ENCODE measurements at regions of chr1 and their contacts with region 1.

Region 1: GRCh38 chr1:154335025-154335714 is 9.8 kb downstream of the ATP8B2 start:
- DNase-seq: peak; percentile 85 to 93 (median 87)
- H3K4me3 ChIP-seq: no peak overlapping the region
- H3K4me3 Mint-ChIP-seq: peak overlapping the region; percentile 68 to 90 (median 80)
- H3K27ac ChIP-seq: peak overlapping the region; percentile 52
- H3K27ac Mint-ChIP-seq: peak overlapping the region; percentile 86 to 99 (median 93)
- H3K4me1 ChIP-seq: peaks cover 93% of the 10 kb centered on the region
- H3K4me1 Mint-ChIP-seq: peaks cover 56 to 93% (median 75%) of the 10 kb centered on the region in 4 donors
- H3K27me3 ChIP-seq: no peaks in the 10 kb centered on the region
- H3K27me3 Mint-ChIP-seq: no peaks in the 10 kb centered on the region

Region 2: GRCh38 chr1:154198756-154199562 is 136.2 kb before region 1 on chr1:
- CTCF ChIA-PET with region 1: interaction called, 46 read pairs
- POLR2A ChIA-PET with region 1: interaction called, 9 read pairs
- intact Hi-C with region 1: loop called (anchors 1 kb)
- DNase-seq: peak; percentile 53 to 62 (median 58)
- H3K4me3 ChIP-seq: no peak overlapping the region
- H3K4me3 Mint-ChIP-seq: no peak overlapping the region
- H3K27ac ChIP-seq: no peak overlapping the region
- H3K27ac Mint-ChIP-seq: peak overlapping the region in 2 of 7 donors; percentile 64 to 74
- H3K4me1 ChIP-seq: peaks cover 7% of the 10 kb centered on the region
- H3K4me1 Mint-ChIP-seq: no peaks in the 10 kb centered on the region
- H3K27me3 ChIP-seq: no peaks in the 10 kb centered on the region
- H3K27me3 Mint-ChIP-seq: peaks cover 0 to 3% of the 10 kb centered on the region in 2 donors

Region 3: GRCh38 chr1:154263465-154264332 is 71.5 kb before region 1 on chr1:
- CTCF ChIA-PET with region 1: interaction called, 10 read pairs
- POLR2A ChIA-PET with region 1: interaction called, 3 read pairs
- intact Hi-C with region 1: no loop called
- DNase-seq: no peak
- H3K4me3 ChIP-seq: no peak overlapping the region
- H3K4me3 Mint-ChIP-seq: no peak overlapping the region
- H3K27ac ChIP-seq: no peak overlapping the region
- H3K27ac Mint-ChIP-seq: peak overlapping the region; percentile 59 to 91 (median 87)
- H3K4me1 ChIP-seq: peaks cover 30% of the 10 kb centered on the region
- H3K4me1 Mint-ChIP-seq: peaks cover 25 to 40% (median 34%) of the 10 kb centered on the region in 4 donors
- H3K27me3 ChIP-seq: no peaks in the 10 kb centered on the region
- H3K27me3 Mint-ChIP-seq: no peaks in the 10 kb centered on the region

Region 4: DNA sequence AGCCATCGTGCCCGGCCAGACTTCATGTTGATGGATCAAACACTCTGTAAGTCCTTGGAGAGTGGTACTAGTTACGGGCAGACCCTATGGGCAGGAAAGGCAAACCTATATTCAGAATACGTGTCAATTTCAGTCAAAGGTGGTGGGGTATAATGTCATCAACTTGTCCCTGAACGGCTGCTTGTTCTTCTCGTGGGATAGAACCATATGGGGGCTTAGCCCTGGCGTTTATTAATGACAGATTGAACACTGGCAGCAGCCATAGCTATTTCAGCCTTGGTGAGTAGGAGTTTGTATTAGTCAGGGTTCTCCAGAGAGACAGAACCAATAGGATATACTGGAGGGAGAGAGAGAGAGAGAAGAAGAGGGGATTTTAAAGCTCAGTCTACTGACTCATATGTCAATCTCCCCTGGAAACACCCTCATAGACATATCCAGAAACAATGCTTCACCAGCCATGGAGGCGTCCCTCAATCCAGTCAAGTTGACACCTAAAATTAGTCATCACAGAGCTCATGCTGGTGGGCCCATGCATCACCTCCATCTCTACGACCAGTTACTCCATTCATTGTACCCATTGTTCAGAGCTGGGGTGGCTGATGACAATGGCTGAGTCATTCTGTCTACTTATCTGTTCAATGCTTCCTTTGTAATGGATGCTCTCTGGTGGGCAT is 30.4 kb before region 1 on chr1:
- CTCF ChIA-PET with region 1: interaction called, 14 read pairs
- POLR2A ChIA-PET with region 1: interaction called, 6 read pairs
- intact Hi-C with region 1: no loop called
- DNase-seq: no peak
- H3K4me3 ChIP-seq: no peak overlapping the region
- H3K4me3 Mint-ChIP-seq: no peak overlapping the region
- H3K27ac ChIP-seq: no peak overlapping the region
- H3K27ac Mint-ChIP-seq: peak overlapping the region in 1 of 7 donors; percentile 71
- H3K4me1 ChIP-seq: peaks cover 13% of the 10 kb centered on the region
- H3K4me1 Mint-ChIP-seq: peaks cover 7 to 12% (median 12%) of the 10 kb centered on the region in 4 donors
- H3K27me3 ChIP-seq: no peaks in the 10 kb centered on the region
- H3K27me3 Mint-ChIP-seq: no peaks in the 10 kb centered on the region

Region 5: GRCh38 chr1:154344977-154345837 is 10.0 kb after region 1 on chr1:
- CTCF ChIA-PET with region 1: interaction called, 543 read pairs
- POLR2A ChIA-PET with region 1: interaction called, 728 read pairs
- intact Hi-C with region 1: loop called (anchors 1 kb)
- DNase-seq: peak; percentile 75 to 84 (median 81)
- H3K4me3 ChIP-seq: peak overlapping the region; percentile 62
- H3K4me3 Mint-ChIP-seq: peak overlapping the region; percentile 87 to 99 (median 94)
- H3K27ac ChIP-seq: peak overlapping the region; percentile 66
- H3K27ac Mint-ChIP-seq: peak overlapping the region; percentile 86 to 98 (median 92)
- H3K4me1 ChIP-seq: peaks cover 96% of the 10 kb centered on the region
- H3K4me1 Mint-ChIP-seq: peaks cover 54 to 98% (median 76%) of the 10 kb centered on the region in 4 donors
- H3K27me3 ChIP-seq: no peaks in the 10 kb centered on the region
- H3K27me3 Mint-ChIP-seq: no peaks in the 10 kb centered on the region

Region 6: DNA sequence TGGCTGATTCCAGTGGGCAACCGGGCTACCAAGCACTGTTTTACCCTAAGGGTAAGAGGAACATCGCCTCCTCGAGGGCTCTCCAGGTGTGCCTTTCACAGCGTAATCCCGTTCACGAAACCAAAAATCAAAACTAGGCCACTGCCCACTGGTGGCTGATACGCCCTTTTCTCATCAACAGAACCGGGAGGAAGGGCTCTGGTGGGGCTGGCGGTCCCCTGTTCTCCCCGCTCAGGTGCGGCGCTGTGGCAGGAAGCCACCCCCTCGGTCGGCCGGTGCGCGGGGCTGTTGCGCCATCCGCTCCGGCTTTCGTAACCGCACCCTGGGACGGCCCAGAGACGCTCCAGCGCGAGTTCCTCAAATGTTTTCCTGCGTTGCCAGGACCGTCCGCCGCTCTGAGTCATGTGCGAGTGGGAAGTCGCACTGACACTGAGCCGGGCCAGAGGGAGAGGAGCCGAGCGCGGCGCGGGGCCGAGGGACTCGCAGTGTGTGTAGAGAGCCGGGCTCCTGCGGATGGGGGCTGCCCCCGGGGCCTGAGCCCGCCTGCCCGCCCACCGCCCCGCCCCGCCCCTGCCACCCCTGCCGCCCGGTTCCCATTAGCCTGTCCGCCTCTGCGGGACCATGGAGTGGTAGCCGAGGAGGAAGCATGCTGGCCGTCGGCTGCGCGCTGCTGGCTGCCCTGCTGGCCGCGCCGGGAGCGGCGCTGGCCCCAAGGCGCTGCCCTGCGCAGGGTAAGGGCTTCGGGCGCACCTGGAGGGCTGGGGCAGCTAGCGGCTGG is 70.0 kb after region 1 on chr1 and contains the start of gene IL6R:
- CTCF ChIA-PET with region 1: interaction called, 71 read pairs
- POLR2A ChIA-PET with region 1: interaction called, 107 read pairs
- intact Hi-C with region 1: no loop called
- DNase-seq: peak; percentile 80 to 85 (median 82)
- H3K4me3 ChIP-seq: peak within 1 kb of the TSS; percentile 71 to 84
- H3K4me3 Mint-ChIP-seq: peak within 1 kb of the TSS; percentile 93 to 99 (median 97)
- H3K27ac ChIP-seq: peak within 1 kb of the TSS; percentile 68
- H3K27ac Mint-ChIP-seq: peak within 1 kb of the TSS; percentile 92 to 97 (median 96)
- H3K4me1 ChIP-seq: peaks cover 73% of the 10 kb centered on the region
- H3K4me1 Mint-ChIP-seq: peaks cover 43 to 86% (median 64%) of the 10 kb centered on the region in 4 donors
- H3K27me3 ChIP-seq: no peaks in the 10 kb centered on the region
- H3K27me3 Mint-ChIP-seq: no peaks in the 10 kb centered on the region
- total RNA-seq, gene IL6R: 101 to 106 TPM

Region 7: DNA sequence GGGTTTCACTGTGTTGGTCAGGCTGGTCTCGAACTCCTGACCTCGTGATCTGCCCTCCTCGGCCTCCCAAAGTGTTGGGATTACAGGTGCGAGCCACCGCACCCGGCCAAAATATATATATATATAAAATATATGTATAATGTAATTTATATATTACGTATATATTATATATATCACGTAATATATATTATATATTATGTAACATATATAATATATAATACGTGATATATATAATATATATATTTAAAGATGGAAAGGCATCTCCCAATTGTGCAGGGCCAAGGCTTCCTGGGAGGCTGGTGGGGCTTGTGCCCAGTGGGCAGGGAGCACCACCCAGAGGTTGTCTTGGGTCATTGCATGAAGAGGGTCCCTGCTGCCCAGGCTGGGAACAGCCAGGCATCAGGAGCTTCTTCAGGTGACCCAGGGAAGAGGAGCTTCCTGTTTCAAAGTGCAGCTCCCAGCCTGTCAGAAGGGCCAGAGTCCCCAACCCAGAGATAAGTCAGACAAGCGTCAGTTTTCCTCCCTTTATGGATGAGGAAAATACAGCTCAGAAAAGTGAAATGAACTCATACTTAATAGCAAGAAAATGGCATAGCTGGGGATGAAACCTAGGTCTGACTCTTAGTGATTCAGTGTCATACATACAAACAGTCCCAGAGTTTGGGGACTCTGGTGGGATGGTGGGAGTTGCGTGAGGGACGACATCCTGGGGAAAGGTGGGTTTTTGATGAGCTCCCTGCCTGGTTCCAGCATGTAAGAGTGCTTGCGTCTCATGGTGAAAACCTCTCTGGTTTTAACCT is 211.3 kb after region 1 on chr1:
- CTCF ChIA-PET with region 1: interaction called, 14 read pairs
- POLR2A ChIA-PET with region 1: no interaction called
- intact Hi-C with region 1: no loop called
- DNase-seq: peak; percentile 36 to 53 (median 47)
- H3K4me3 ChIP-seq: no peak overlapping the region
- H3K4me3 Mint-ChIP-seq: no peak overlapping the region
- H3K27ac ChIP-seq: no peak overlapping the region
- H3K27ac Mint-ChIP-seq: peak overlapping the region in 4 of 7 donors; percentile 25 to 67 (median 43)
- H3K4me1 ChIP-seq: peaks cover 13% of the 10 kb centered on the region
- H3K4me1 Mint-ChIP-seq: peaks cover 7 to 21% (median 13%) of the 10 kb centered on the region in 4 donors
- H3K27me3 ChIP-seq: no peaks in the 10 kb centered on the region
- H3K27me3 Mint-ChIP-seq: no peaks in the 10 kb centered on the region

Region 8: DNA sequence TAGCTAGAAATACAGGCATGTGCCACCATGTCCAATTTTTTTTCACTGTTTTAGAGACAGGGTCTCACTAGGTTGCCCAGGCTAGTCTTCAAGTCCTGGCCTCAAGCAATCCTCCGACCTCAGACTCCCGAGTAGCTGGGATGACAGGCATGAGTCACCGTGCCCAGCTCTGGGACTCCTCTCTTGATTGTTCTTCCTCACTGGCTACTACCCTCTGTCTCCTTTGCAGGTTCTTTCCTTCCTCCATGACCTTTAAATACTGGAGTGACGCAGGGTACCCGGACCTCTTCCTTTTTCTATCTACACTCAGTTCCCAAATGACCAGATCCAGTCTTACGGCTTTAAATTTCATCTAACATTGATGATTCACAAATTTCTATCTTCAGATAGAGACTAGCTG is 1192.5 kb after region 1 on chr1:
- CTCF ChIA-PET with region 1: no interaction called
- POLR2A ChIA-PET with region 1: no interaction called
- intact Hi-C with region 1: no loop called
- DNase-seq: no peak
- H3K4me3 ChIP-seq: no peak overlapping the region
- H3K4me3 Mint-ChIP-seq: no peak overlapping the region
- H3K27ac ChIP-seq: no peak overlapping the region
- H3K27ac Mint-ChIP-seq: no peak overlapping the region
- H3K4me1 ChIP-seq: peaks cover 27% of the 10 kb centered on the region
- H3K4me1 Mint-ChIP-seq: peaks cover 32 to 56% (median 41%) of the 10 kb centered on the region in 4 donors
- H3K27me3 ChIP-seq: no peaks in the 10 kb centered on the region
- H3K27me3 Mint-ChIP-seq: no peaks in the 10 kb centered on the region